ENCODE measurements at regions of chr18 and their contacts with region 1.

Region 1: GRCh38 chr18:57780706-57781347 is 22.3 kb downstream of the ATP8B1 start:
- DNase-seq: peak in 1 of 2 donors; percentile 68
- H3K4me3 ChIP-seq: peak overlapping the region in 1 of 2 donors; percentile 31
- H3K27ac ChIP-seq: peak overlapping the region; percentile 81 to 88
- H3K4me1 ChIP-seq: peaks cover 20 to 47% of the 10 kb centered on the region in 2 donors
- H3K27me3 ChIP-seq: no peaks in the 10 kb centered on the region
- CTCF ChIP-seq: no peak

Region 2: GRCh38 chr18:57544936-57545660 is 235.7 kb before region 1 on chr18:
- intact Hi-C with region 1: no loop called
- DNase-seq: no peak
- H3K4me3 ChIP-seq: no peak overlapping the region
- H3K27ac ChIP-seq: no peak overlapping the region
- H3K4me1 ChIP-seq: no peaks in the 10 kb centered on the region
- H3K27me3 ChIP-seq: no peaks in the 10 kb centered on the region
- CTCF ChIP-seq: no peak

Region 3: DNA sequence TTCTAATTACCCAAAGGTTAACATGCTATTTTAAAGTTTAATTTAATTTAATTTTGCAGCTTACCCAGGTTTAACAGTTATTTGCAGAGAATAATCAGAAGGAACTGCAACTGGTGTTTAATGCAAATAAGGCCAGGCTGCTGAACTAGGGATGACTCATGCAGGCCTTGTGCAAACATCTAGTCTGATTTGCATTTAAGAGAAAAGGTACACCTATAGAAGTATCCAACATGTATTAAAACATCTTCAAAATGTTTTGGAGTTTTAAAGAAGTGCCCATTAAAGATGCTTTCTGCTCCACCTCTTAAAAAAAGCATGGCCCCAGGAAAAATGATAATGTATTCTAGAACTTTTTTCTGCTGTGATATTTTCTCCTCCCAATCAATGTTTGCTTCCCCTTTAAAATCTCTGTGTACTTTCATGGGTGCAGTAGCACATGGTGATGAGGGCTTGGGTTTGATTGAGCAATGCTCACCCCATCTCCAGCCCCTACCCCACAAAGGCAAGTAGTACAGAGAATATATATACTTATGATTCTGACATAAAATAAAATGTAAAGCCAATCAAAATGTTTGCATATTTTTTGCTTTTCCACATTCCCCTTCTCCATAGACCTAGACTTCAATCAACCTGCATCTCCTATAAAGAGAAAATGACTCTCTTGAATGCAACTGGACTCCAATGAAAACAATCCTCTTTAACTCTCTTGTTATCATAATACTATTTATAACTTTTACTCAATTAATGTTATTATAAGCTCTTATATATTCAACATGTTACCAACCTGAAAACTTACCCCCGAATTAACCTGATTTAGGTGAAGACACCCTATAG is 31.8 kb before region 1 on chr18:
- intact Hi-C with region 1: loop called (anchors 5 kb)
- DNase-seq: no peak
- H3K4me3 ChIP-seq: no peak overlapping the region
- H3K27ac ChIP-seq: peak overlapping the region; percentile 70 to 88
- H3K4me1 ChIP-seq: peaks cover 9 to 41% of the 10 kb centered on the region in 2 donors
- H3K27me3 ChIP-seq: no peaks in the 10 kb centered on the region
- CTCF ChIP-seq: no peak

Measured in ascending aorta (tissue), 2 donors.